ENCODE measurements at regions of chr14 and their contacts with region 1.

Region 1: GRCh38 chr14:88667555-88668273 is 104.9 kb downstream of the ZC3H14 start:
- DNase-seq: peak; percentile 64
- H3K4me3 ChIP-seq: no peak overlapping the region
- H3K27ac ChIP-seq: no peak overlapping the region
- H3K4me1 ChIP-seq: no peaks in the 10 kb centered on the region
- H3K27me3 ChIP-seq: peaks cover 0 to 3% of the 10 kb centered on the region in 2 experiments
- CTCF ChIP-seq: peak; percentile 79 to 84
- POLR2A ChIP-seq: no peak

Region 2: GRCh38 chr14:88613552-88614010 is 54.1 kb before region 1 on chr14:
- CTCF ChIA-PET with region 1: interaction called, 14 read pairs
- POLR2A ChIA-PET with region 1: no interaction called
- dilution Hi-C with region 1: no loop called
- intact Hi-C with region 1: no loop called
- DNase-seq: peak; percentile 81
- H3K4me3 ChIP-seq: no peak overlapping the region
- H3K27ac ChIP-seq: peak overlapping the region; percentile 78
- H3K4me1 ChIP-seq: peaks cover 39% of the 10 kb centered on the region
- H3K27me3 ChIP-seq: no peaks in the 10 kb centered on the region
- CTCF ChIP-seq: no peak
- POLR2A ChIP-seq: no peak

Region 3: GRCh38 chr14:88792572-88793258 is 125.0 kb after region 1 on chr14 and contains the start of gene EML5:
- CTCF ChIA-PET with region 1: interaction called, 3 read pairs
- POLR2A ChIA-PET with region 1: no interaction called
- dilution Hi-C with region 1: no loop called
- intact Hi-C with region 1: loop called (anchors 1 kb)
- DNase-seq: peak; percentile 76
- H3K4me3 ChIP-seq: peak within 1 kb of the TSS; percentile 7 to 38 (median 35)
- H3K27ac ChIP-seq: no peak within 1 kb of the TSS
- H3K4me1 ChIP-seq: peaks cover 7% of the 10 kb centered on the region
- H3K27me3 ChIP-seq: peaks cover 21 to 34% of the 10 kb centered on the region in 2 experiments
- CTCF ChIP-seq: peak in 1 of 2 donors; percentile 26
- POLR2A ChIP-seq: no peak
- total RNA-seq, gene EML5: 0.09 TPM in 1 of 2 replicates, not detected in the other

Region 4: GRCh38 chr14:88929656-88930425 is 262.1 kb after region 1 on chr14:
- CTCF ChIA-PET with region 1: interaction called, 28 read pairs
- POLR2A ChIA-PET with region 1: no interaction called
- dilution Hi-C with region 1: no loop called
- intact Hi-C with region 1: no loop called
- DNase-seq: peak; percentile 4
- H3K4me3 ChIP-seq: no peak overlapping the region
- H3K27ac ChIP-seq: no peak overlapping the region
- H3K4me1 ChIP-seq: no peaks in the 10 kb centered on the region
- H3K27me3 ChIP-seq: no peaks in the 10 kb centered on the region
- CTCF ChIP-seq: peak; percentile 16 to 33
- POLR2A ChIP-seq: no peak

Region 5: GRCh38 chr14:89027097-89027740 is 359.5 kb after region 1 on chr14:
- CTCF ChIA-PET with region 1: interaction called, 10 read pairs
- POLR2A ChIA-PET with region 1: no interaction called
- dilution Hi-C with region 1: no loop called
- intact Hi-C with region 1: loop called (anchors 1 kb)
- DNase-seq: peak; percentile 25
- H3K4me3 ChIP-seq: peak overlapping the region; percentile 40 to 65 (median 56)
- H3K27ac ChIP-seq: no peak overlapping the region
- H3K4me1 ChIP-seq: peaks cover 9% of the 10 kb centered on the region
- H3K27me3 ChIP-seq: peaks cover 25 to 39% of the 10 kb centered on the region in 2 experiments
- CTCF ChIP-seq: peak; percentile 74 to 88
- POLR2A ChIP-seq: no peak

Measured in endothelial cell of umbilical vein (primary cell).